Activated CD4-positive, alpha-beta memory T cell treated with anti-CD3 and anti-CD28 coated beads for 36 hours (primary cell): ENCODE measurements at regions of chr4 and their contacts with region 1.

Region 1: GRCh38 chr4:176340871-176341685 is 21.3 kb downstream of the SPCS3 start:
- DNase-seq: no peak
- H3K4me3 Mint-ChIP-seq: no peak overlapping the region
- H3K27ac Mint-ChIP-seq: no peak overlapping the region
- H3K4me1 Mint-ChIP-seq: peaks cover 2% of the 10 kb centered on the region
- H3K27me3 Mint-ChIP-seq: no peaks in the 10 kb centered on the region

Region 2: GRCh38 chr4:175947117-175947722 is 393.9 kb before region 1 on chr4:
- CTCF ChIA-PET with region 1: interaction called, 9 read pairs
- POLR2A ChIA-PET with region 1: no interaction called
- intact Hi-C with region 1: loop called (anchors 1 kb)
- DNase-seq: no peak
- H3K4me3 Mint-ChIP-seq: no peak overlapping the region
- H3K27ac Mint-ChIP-seq: no peak overlapping the region
- H3K4me1 Mint-ChIP-seq: peaks cover 6% of the 10 kb centered on the region
- H3K27me3 Mint-ChIP-seq: peaks cover 3% of the 10 kb centered on the region

Region 3: DNA sequence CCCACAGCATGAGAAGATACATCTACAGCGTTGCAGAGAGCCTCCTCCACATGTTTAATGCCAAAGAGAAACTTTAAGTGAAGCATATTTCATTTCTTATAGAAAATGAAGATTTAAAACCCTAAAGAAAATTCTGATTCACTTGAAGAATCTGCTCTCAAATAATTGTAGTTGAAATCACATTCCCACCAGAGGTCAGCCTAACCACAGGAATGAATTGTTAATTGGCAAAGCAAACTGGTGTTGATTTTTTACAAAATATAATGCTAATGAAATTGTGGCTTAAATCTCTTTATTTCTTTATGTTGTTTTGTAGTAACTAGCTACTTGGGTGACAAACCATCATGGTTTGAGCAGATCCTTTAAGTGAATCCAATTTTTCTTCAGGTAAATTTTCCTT is 306.6 kb before region 1 on chr4:
- CTCF ChIA-PET with region 1: interaction called, 12 read pairs
- POLR2A ChIA-PET with region 1: no interaction called
- intact Hi-C with region 1: loop called (anchors 1 kb)
- DNase-seq: no peak
- H3K4me3 Mint-ChIP-seq: no peak overlapping the region
- H3K27ac Mint-ChIP-seq: no peak overlapping the region
- H3K4me1 Mint-ChIP-seq: no peaks in the 10 kb centered on the region
- H3K27me3 Mint-ChIP-seq: no peaks in the 10 kb centered on the region

Region 4: DNA sequence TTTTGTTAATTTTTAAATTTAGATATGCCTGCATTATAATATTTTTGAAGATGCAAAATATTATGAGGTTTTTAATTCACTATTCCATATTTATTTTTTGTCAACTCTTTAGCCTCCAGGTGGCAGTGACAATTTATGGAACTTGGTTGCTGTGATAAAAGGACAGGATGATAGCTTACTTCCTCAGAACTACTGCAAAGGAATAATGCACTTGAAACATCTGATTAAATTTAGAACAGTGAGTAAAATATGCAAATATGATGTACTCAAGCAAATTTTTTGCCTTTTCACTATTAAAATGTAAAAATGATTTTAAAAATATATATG is 190.8 kb before region 1 on chr4:
- CTCF ChIA-PET with region 1: interaction called, 36 read pairs
- POLR2A ChIA-PET with region 1: no interaction called
- intact Hi-C with region 1: loop called (anchors 1 kb)
- DNase-seq: no peak
- H3K4me3 Mint-ChIP-seq: no peak overlapping the region
- H3K27ac Mint-ChIP-seq: no peak overlapping the region
- H3K4me1 Mint-ChIP-seq: no peaks in the 10 kb centered on the region
- H3K27me3 Mint-ChIP-seq: no peaks in the 10 kb centered on the region

Region 5: DNA sequence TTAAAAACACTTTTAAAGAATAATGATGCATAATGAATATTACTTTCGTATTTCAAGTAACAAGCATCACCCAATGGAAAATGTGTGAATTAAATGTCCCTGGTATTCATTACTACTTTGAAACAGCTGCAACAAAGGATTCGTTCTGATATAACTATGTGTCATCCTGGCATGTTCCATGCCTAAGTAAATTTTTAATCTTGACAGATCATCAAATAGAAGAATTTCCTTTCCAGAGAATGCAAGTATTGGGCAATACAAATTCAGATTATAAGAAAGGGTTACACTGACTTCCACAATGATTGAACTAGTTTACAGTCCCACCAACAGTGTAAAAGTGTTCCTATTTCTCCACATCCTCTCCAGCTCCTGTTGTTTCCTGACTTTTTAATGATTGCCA is 84.0 kb after region 1 on chr4:
- CTCF ChIA-PET with region 1: no interaction called
- POLR2A ChIA-PET with region 1: no interaction called
- intact Hi-C with region 1: no loop called
- DNase-seq: no peak
- H3K4me3 Mint-ChIP-seq: no peak overlapping the region
- H3K27ac Mint-ChIP-seq: no peak overlapping the region
- H3K4me1 Mint-ChIP-seq: no peaks in the 10 kb centered on the region
- H3K27me3 Mint-ChIP-seq: peaks cover 1% of the 10 kb centered on the region